Activated CD4-positive, alpha-beta memory T cell treated with anti-CD3 and anti-CD28 coated beads, Interleukin-2, amount 10 ng/mL, durations not matched to agents 7 days and 5 days (primary cell): ENCODE measurements at regions of chr11 and their contacts with region 1.

Region 1: DNA sequence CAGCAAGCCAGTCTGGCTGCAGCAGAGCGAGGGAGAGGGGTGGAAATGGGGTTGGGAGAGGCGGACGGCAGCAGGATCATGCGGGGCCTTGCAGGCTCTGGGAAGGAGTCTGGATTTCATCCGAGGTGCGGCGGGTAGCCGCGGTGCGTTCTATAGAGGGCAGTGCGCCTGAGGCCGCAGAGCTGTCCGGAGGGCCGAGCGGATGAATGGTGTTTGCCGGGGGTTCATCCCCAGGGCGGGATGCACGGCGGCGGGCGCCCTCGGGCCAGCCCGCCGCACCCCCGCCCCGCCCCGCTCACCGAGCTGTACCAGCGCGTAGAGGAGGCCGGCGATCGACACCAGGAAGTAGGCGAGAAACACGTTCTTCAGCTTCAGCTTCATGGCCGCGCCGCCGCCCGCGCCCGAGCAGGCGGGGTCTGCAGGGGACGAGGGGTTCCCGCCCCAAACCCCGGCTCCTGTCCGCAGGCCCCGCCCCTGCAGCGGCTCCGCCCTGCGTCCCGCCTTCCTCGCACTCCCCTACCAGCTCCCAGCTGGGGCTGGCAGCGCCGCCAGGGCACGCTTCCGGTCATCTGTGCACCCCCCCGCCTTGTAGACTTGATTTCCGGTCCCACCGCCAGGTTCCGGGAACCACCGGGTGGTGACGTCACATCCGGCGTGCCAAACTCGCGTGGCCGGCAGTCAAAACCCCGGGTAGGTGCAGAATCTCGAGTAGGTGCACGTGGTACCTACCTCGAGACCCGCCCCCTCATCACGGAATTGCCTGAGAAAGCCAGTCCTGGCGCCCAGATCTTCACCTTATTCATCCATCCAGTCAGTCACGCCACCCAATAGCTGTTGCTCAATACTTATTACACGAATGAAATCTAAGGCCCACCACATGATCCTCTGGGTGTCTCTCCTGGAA is at the start of gene B3GAT3:
- DNase-seq: peak; percentile 97
- H3K4me3 Mint-ChIP-seq: peak within 1 kb of the TSS; percentile 87
- H3K27ac Mint-ChIP-seq: peak within 1 kb of the TSS; percentile 98
- H3K4me1 Mint-ChIP-seq: peaks cover 29% of the 10 kb centered on the region
- H3K27me3 Mint-ChIP-seq: no peaks in the 10 kb centered on the region
- total RNA-seq, gene B3GAT3: 58.9 to 67.1 TPM

Region 2: DNA sequence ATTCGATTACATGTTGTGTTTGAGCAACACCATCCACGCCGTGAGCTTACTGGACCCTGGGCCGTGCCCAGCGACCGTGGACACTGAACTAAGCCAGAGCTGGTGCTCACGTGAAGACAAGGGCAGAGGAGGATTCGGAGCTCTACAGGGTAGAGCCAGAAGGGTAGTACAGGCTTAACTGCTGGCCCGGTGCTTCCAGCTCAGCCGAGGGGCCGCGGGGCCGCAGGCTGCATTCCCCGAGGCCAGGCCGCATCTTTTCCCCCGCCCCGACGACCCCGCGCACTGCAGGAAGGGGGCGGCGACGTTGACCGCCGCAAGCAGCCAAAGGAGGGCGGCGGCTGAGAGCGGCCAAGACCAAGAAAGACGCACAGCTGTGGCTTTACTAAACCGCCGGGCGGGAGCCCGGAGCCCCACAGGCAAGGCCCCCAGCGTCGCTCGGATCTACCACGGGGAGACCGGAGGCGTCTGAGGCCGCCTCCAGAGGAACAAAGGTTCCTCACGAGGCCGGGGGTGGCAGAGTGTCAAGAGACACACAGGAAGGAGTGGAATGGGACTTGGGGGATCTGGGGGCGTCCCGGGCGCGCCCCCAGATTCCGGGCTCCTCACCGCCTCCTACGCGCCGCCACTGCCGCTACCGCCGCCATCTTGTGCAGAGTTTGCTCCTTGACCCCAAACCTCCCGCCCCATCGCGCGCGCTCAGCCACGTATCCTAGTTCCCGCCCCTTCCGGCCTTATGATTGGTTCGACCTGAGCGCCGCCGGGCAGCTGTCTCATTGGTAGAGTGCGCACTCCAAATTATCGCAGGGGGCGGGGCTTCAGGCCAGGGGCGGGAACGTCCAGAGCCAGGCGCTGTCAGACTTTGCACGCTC is 24.4 kb after region 1 on chr11 and contains the start of gene GANAB:
- CTCF ChIA-PET with region 1: interaction called, 4 read pairs
- POLR2A ChIA-PET with region 1: interaction called, 29 read pairs
- DNase-seq: peak; percentile 99
- H3K4me3 Mint-ChIP-seq: peak within 1 kb of the TSS; percentile 99
- H3K27ac Mint-ChIP-seq: peak within 1 kb of the TSS; percentile 94
- H3K4me1 Mint-ChIP-seq: peaks cover 47% of the 10 kb centered on the region
- H3K27me3 Mint-ChIP-seq: no peaks in the 10 kb centered on the region
- total RNA-seq, gene GANAB: 278 to 284 TPM

Region 3: GRCh38 chr11:62652161-62653006 is 30.6 kb after region 1 on chr11:
- CTCF ChIA-PET with region 1: interaction called, 3 read pairs
- POLR2A ChIA-PET with region 1: interaction called, 43 read pairs
- DNase-seq: peak; percentile 47
- H3K4me3 Mint-ChIP-seq: peak overlapping the region; percentile 91
- H3K27ac Mint-ChIP-seq: peak overlapping the region; percentile 85
- H3K4me1 Mint-ChIP-seq: peaks cover 34% of the 10 kb centered on the region
- H3K27me3 Mint-ChIP-seq: no peaks in the 10 kb centered on the region

Region 4: DNA sequence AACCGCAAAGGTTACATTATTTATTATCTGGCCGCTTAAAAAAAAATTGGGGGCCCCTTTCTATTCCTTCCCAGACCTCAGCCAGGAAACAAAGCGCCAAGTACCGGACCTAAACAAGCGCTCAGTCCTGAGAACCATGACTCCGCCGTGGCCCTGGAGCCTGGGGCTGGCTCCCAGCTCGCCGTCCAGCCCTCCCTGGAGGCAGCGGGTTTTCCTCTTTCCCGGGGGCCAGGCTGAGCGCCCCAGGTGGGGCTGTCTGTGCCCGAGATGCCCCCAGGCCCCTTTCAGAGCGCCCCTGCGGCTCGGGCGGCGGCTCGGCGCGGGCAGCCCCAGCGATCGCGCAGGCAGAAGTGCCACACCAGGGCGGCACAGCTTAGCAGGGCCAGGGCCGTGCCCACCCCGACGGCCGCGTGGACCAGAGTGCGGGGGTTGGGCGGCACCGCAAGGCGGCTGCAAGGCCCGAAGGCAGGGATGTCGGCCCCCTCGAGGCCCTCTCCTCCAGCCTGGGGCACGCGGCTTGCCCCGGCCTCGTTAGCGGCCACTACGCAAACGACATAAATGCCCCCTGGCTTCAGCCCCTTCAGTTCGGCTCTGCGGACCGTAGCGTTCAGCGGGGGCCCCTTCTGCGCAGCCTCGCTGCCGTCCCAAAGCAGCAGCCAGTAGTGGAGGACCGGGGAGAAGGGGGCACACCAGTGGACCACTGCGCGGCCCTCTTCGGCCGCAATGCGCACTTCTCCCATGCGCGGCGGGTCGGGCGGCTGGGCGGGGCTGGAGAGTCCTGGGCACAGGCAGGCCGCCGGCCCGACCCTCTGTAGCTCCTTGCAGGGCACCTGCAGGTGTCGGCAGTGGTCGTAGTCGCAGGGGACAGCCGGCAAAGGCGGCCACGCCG is 65.9 kb after region 1 on chr11:
- CTCF ChIA-PET with region 1: no interaction called
- POLR2A ChIA-PET with region 1: no interaction called
- DNase-seq: no peak
- H3K4me3 Mint-ChIP-seq: no peak overlapping the region
- H3K27ac Mint-ChIP-seq: no peak overlapping the region
- H3K4me1 Mint-ChIP-seq: no peaks in the 10 kb centered on the region
- H3K27me3 Mint-ChIP-seq: peaks cover 4% of the 10 kb centered on the region